Ovary (tissue), 10 donors: ENCODE measurements at regions of chr1 and their contacts with region 1.

Region 1: GRCh38 chr1:55140546-55140983 is 74.6 kb downstream of the USP24 start:
- DNase-seq: peak; percentile 40 to 82 (median 62)
- H3K4me3 ChIP-seq: no peak overlapping the region
- H3K27ac ChIP-seq: no peak overlapping the region
- H3K4me1 ChIP-seq: no peaks in the 10 kb centered on the region
- H3K27me3 ChIP-seq: no peaks in the 10 kb centered on the region
- CTCF ChIP-seq: peak; percentile 46 to 67 (median 63)
- EP300 ChIP-seq: peak; percentile 33
- POLR2A ChIP-seq: no peak

Region 2: GRCh38 chr1:55215256-55216021 is 74.9 kb after region 1 on chr1 and contains the start of gene USP24:
- intact Hi-C with region 1: loop called in 2 of 4 experiments (anchors 10 kb)
- DNase-seq: peak; percentile 70 to 83 (median 78)
- H3K4me3 ChIP-seq: peak within 1 kb of the TSS; percentile 90
- H3K27ac ChIP-seq: peak within 1 kb of the TSS; percentile 95 to 97
- H3K4me1 ChIP-seq: peaks cover 7% of the 10 kb centered on the region
- H3K27me3 ChIP-seq: no peaks in the 10 kb centered on the region
- CTCF ChIP-seq: no peak
- EP300 ChIP-seq: no peak
- POLR2A ChIP-seq: peak; percentile 81
- total RNA-seq, gene USP24: 29.8 to 51.4 (median 42.5) TPM

Region 3: GRCh38 chr1:55277377-55278130 is 137.0 kb after region 1 on chr1:
- intact Hi-C with region 1: loop called in 3 of 4 experiments (anchors 5 kb)
- DNase-seq: peak; percentile 75 to 85 (median 83)
- H3K4me3 ChIP-seq: no peak overlapping the region
- H3K27ac ChIP-seq: no peak overlapping the region
- H3K4me1 ChIP-seq: no peaks in the 10 kb centered on the region
- H3K27me3 ChIP-seq: no peaks in the 10 kb centered on the region
- CTCF ChIP-seq: peak; percentile 67 to 77 (median 69)
- EP300 ChIP-seq: no peak
- POLR2A ChIP-seq: no peak